ENCODE measurements at regions of chr18 and their contacts with region 1.

Region 1: GRCh38 chr18:70195852-70196434 is 9.5 kb downstream of the RTTN start:
- DNase-seq: peak in 1 of 2 donors; percentile 48
- ATAC-seq: peak in 2 of 3 donors; percentile 55 to 60
- H3K4me3 ChIP-seq: no peak overlapping the region
- H3K4me3 Mint-ChIP-seq: no peak overlapping the region
- H3K27ac ChIP-seq: no peak overlapping the region
- H3K27ac Mint-ChIP-seq: no peak overlapping the region
- H3K4me1 ChIP-seq: no peaks in the 10 kb centered on the region
- H3K4me1 Mint-ChIP-seq: peaks cover 0 to 5% of the 10 kb centered on the region in 2 donors
- H3K27me3 ChIP-seq: no peaks in the 10 kb centered on the region
- H3K27me3 Mint-ChIP-seq: no peaks in the 10 kb centered on the region
- CTCF ChIP-seq: peak; percentile 61

Region 2: DNA sequence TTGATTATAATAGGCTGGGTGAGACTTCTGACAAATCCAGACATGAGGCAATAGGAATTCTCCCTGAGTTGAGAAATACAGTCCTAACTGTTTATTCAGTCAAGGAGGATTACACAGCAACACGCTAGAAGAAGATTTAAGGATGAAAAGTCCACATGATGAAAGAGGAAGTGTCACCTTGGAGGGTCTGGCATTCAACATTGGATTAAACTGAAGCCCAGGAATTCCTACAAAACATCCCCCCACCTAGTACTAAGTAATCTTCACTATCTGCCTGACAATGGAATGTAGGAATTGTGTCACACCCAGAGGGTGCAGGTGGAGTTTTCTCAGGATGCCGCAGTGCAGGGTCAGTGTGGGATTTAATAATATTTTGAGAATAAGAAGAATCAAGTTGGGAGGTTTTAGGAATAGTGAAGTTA is 235.3 kb after region 1 on chr18:
- intact Hi-C with region 1: loop called (anchors 1 kb)
- DNase-seq: no peak
- ATAC-seq: no peak
- H3K4me3 ChIP-seq: no peak overlapping the region
- H3K4me3 Mint-ChIP-seq: no peak overlapping the region
- H3K27ac ChIP-seq: no peak overlapping the region
- H3K27ac Mint-ChIP-seq: no peak overlapping the region
- H3K4me1 ChIP-seq: no peaks in the 10 kb centered on the region
- H3K4me1 Mint-ChIP-seq: no peaks in the 10 kb centered on the region
- H3K27me3 ChIP-seq: no peaks in the 10 kb centered on the region
- H3K27me3 Mint-ChIP-seq: no peaks in the 10 kb centered on the region
- CTCF ChIP-seq: no peak

Region 3: GRCh38 chr18:70454704-70455322 is 258.9 kb after region 1 on chr18:
- intact Hi-C with region 1: loop called (anchors 5 kb)
- DNase-seq: peak in 1 of 2 donors; percentile 67
- ATAC-seq: peak; percentile 48 to 64 (median 52)
- H3K4me3 ChIP-seq: no peak overlapping the region
- H3K4me3 Mint-ChIP-seq: no peak overlapping the region
- H3K27ac ChIP-seq: no peak overlapping the region
- H3K27ac Mint-ChIP-seq: no peak overlapping the region
- H3K4me1 ChIP-seq: no peaks in the 10 kb centered on the region
- H3K4me1 Mint-ChIP-seq: no peaks in the 10 kb centered on the region
- H3K27me3 ChIP-seq: no peaks in the 10 kb centered on the region
- H3K27me3 Mint-ChIP-seq: peaks cover 0 to 5% of the 10 kb centered on the region in 2 donors
- CTCF ChIP-seq: peak; percentile 73